ENCODE measurements at regions of chr11 and their contacts with region 1.

Region 1: GRCh38 chr11:93089474-93090102 is 108.2 kb downstream of the SLC36A4 start:
- DNase-seq: peak; percentile 73
- ATAC-seq: peak; percentile 96
- H3K4me3 ChIP-seq: no peak overlapping the region
- H3K27ac ChIP-seq: no peak overlapping the region
- H3K4me1 ChIP-seq: peaks cover 10% of the 10 kb centered on the region; the same call in 1 of the 2 replicates
- H3K27me3 ChIP-seq: peaks cover 20% of the 10 kb centered on the region
- CTCF ChIP-seq: peak; percentile 78

Region 2: GRCh38 chr11:93169950-93170561 is 80.5 kb after region 1 on chr11:
- CTCF ChIA-PET with region 1: no interaction called
- POLR2A ChIA-PET with region 1: no interaction called
- intact Hi-C with region 1: loop called (anchors 2 kb)
- DNase-seq: peak; percentile 67
- ATAC-seq: peak; percentile 61
- H3K4me3 ChIP-seq: no peak overlapping the region
- H3K27ac ChIP-seq: no peak overlapping the region
- H3K4me1 ChIP-seq: no peaks in the 10 kb centered on the region
- H3K27me3 ChIP-seq: no peaks in the 10 kb centered on the region
- CTCF ChIP-seq: peak; percentile 67

Region 3: GRCh38 chr11:93225662-93226061 is 136.1 kb after region 1 on chr11:
- CTCF ChIA-PET with region 1: interaction called, 3 read pairs
- POLR2A ChIA-PET with region 1: no interaction called
- intact Hi-C with region 1: loop called (anchors 1 kb)
- DNase-seq: peak; percentile 54
- ATAC-seq: no peak; the same call in 1 of the 2 replicates
- H3K4me3 ChIP-seq: no peak overlapping the region
- H3K27ac ChIP-seq: no peak overlapping the region
- H3K4me1 ChIP-seq: no peaks in the 10 kb centered on the region
- H3K27me3 ChIP-seq: peaks cover 19% of the 10 kb centered on the region
- CTCF ChIP-seq: peak; percentile 66

Measured in PC-3 (cell line).